Astrocyte of the cerebellum (primary cell): ENCODE measurements at regions of chr6 and their contacts with region 1.

Region 1: DNA sequence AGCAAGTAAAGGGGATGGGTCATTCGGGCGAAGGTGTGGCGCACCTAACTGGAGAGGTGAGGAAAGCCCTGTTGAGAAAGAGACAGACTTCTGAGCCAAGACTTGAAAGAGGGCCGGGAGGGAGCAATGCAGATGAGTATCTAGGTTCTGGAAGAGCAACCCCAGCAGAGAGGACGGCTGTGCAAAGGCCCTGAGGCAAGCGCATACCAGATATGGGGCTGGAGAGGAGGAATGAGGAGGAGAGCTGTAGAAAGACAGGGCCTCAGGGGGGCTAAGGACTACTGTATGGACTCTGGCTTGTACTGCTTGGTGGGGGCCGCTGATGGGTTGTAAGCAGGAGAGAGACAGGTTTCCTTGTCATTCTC is 21.9 kb downstream of the TRERF1 start:
- DNase-seq: no peak
- H3K4me3 ChIP-seq: no peak overlapping the region
- CTCF ChIP-seq: no peak

Region 2: DNA sequence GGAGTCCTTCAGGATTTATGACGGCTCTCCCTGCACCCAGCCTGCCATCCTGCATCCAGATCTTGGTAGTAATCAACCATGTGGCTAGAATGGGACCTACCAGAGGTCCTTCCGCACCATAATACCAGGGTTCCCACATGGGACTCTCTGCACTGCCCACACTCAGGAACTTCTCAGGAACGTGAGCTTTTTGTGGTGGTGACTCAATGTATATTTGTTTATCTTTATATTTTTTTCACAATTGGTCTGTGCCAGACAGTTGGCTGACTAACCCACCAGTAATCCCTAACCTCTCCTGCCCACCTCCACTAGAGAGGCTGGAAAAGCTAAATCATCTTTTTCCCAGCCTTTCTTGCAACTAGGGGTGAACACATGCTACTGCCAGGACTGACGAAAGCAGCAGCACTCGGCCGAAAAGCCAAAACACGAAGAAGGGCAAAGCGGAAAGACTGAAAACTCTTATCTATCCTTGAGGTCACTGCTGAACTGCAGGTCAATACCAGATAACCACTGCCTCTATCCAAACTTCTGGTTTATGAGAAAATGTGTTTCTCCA is 91.1 kb before region 1 on chr6:
- in situ Hi-C with region 1: no loop called
- DNase-seq: peak; percentile 95
- H3K4me3 ChIP-seq: no peak overlapping the region
- CTCF ChIP-seq: peak; percentile 24

Region 3: DNA sequence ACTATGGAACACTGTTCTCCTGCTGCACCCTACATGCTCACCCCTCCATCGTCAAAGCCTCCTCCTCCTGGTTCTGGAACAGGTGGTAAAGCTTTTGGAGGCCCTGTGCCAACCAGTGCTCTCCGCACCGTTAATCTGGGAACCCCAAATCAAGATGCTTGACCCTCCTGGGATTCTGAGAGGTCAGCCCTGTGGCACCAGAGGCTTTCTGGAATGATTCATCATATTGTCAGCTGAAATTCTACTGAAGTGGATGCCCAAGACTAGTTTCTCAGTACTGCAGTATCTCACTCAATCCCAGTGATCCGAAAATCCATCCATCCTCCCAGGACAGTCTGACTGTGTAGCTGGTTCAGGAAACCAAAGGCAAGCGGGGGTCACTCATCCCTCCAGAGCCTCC is 70.8 kb before region 1 on chr6:
- in situ Hi-C with region 1: loop called (anchors 5 kb)
- DNase-seq: no peak
- H3K4me3 ChIP-seq: no peak overlapping the region
- CTCF ChIP-seq: no peak

Region 4: DNA sequence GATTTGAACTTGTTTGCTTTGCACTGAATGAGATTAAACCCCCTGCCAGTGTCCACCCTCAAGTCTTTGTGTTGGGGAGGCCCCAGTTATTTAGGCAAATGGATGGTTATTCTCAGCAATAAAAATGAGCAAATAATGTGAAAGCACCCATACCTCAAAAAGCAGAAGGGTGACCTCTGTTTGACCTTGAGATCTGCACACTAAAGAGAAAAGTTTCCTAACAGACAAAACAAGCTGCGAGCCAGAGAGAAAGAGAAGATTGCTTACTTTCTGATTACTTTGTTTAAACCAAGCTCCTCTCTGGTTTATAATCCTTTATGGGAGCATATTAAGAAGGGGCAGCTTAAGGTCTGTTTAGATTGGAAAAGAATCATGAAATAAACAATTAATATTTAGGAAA is 52.3 kb after region 1 on chr6:
- in situ Hi-C with region 1: loop called (anchors 5 kb)
- DNase-seq: no peak
- H3K4me3 ChIP-seq: no peak overlapping the region
- CTCF ChIP-seq: no peak